ENCODE measurements at regions of chr9 and their contacts with region 1.

Region 1: DNA sequence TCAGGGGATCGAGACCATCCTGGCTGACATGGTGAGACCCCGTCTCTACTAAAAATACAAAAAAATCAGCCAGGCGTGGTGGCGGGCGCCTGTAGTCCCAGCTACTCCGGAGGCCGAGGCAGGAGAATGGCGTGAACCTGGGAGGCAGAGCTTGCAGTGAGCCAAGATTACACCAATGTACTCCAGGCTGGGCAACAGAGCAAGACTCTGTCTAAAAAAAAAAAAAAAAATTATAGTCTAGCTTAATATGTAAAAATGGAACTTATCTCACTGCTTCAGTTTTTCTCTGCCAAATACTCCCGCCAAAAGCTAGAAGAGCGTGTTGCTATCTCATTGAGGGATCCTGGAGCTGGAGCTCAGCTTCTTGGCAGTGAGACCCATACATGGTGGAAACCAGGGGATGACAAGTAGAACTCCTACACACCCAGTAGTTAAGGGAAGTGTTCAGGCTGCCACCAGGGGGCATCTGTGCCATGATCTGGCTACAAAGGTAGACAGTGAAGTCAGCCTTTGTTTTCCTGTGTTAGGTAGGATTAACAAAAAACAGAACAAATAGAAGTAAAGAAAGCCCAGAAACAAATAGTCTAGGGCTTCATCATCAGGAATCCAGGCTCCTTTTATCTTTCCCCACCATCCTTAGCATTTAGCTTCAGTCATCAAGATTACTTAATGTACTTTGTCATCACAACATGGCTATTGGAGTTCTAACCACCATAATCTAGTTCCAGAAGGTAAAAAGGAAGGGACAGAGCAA is 33.6 kb upstream of the GLIPR2 start:
- DNase-seq: peak; percentile 92
- H3K4me3 Mint-ChIP-seq: no peak overlapping the region
- H3K27ac Mint-ChIP-seq: no peak overlapping the region
- H3K4me1 Mint-ChIP-seq: peaks cover 8% of the 10 kb centered on the region
- H3K27me3 Mint-ChIP-seq: no peaks in the 10 kb centered on the region

Region 2: GRCh38 chr9:36036780-36037548 is 66.0 kb before region 1 on chr9 and contains the start of gene RECK:
- CTCF ChIA-PET with region 1: interaction called, 11 read pairs
- POLR2A ChIA-PET with region 1: no interaction called
- intact Hi-C with region 1: no loop called
- DNase-seq: peak; percentile 93
- H3K4me3 Mint-ChIP-seq: peak within 1 kb of the TSS; percentile 81
- H3K27ac Mint-ChIP-seq: peak within 1 kb of the TSS; percentile 2
- H3K4me1 Mint-ChIP-seq: peaks cover 37% of the 10 kb centered on the region
- H3K27me3 Mint-ChIP-seq: peaks cover under 1% of the 10 kb centered on the region
- total RNA-seq, gene RECK: 6.1 to 7.2 TPM

Region 3: GRCh38 chr9:36136272-36136893 is 33.5 kb after region 1 on chr9 and contains the start of gene GLIPR2:
- CTCF ChIA-PET with region 1: interaction called, 22 read pairs
- POLR2A ChIA-PET with region 1: interaction called, 3 read pairs
- intact Hi-C with region 1: loop called (anchors 1 kb)
- DNase-seq: peak; percentile 84
- H3K4me3 Mint-ChIP-seq: peak within 1 kb of the TSS; percentile 79
- H3K27ac Mint-ChIP-seq: peak within 1 kb of the TSS; percentile 48
- H3K4me1 Mint-ChIP-seq: peaks cover 45% of the 10 kb centered on the region
- H3K27me3 Mint-ChIP-seq: no peaks in the 10 kb centered on the region
- total RNA-seq, gene GLIPR2: 24.7 to 25.8 TPM

Region 4: GRCh38 chr9:36190388-36191287 is 87.7 kb after region 1 on chr9 and contains the start of gene CLTA:
- CTCF ChIA-PET with region 1: interaction called, 37 read pairs
- POLR2A ChIA-PET with region 1: interaction called, 12 read pairs
- intact Hi-C with region 1: no loop called
- DNase-seq: peak; percentile 98
- H3K4me3 Mint-ChIP-seq: peak within 1 kb of the TSS; percentile 94
- H3K27ac Mint-ChIP-seq: peak within 1 kb of the TSS; percentile 86
- H3K4me1 Mint-ChIP-seq: peaks cover 45% of the 10 kb centered on the region
- H3K27me3 Mint-ChIP-seq: no peaks in the 10 kb centered on the region
- total RNA-seq, gene CLTA: 139 to 144 TPM

Measured in activated CD4-positive, alpha-beta memory T cell treated with anti-CD3 and anti-CD28 coated beads for 36 hours (primary cell).